SK-N-SH (cell line): ENCODE measurements at regions of chr11 and their contacts with region 1.

Region 1: DNA sequence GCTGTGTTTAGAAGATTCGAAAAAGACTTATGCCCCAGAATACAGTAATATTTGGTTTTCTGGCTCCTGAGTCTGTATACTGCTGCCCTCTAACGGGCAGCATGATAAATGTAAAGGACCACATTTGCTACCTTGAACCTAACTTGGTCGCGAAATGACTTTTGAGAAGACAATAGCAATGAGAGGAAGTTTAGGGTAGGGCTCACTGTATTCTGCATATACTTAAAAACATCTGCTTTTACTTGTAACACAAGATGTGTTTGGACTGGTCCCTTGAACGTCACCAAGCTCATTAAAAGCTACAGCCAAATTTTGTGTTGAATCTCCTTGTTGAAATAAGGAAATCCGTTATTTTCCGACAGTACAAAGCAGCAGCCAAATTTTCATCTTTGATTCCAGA is 309.1 kb downstream of the SWAP70 start:
- DNase-seq: peak; percentile 67
- H3K4me3 ChIP-seq: no peak overlapping the region
- H3K27ac ChIP-seq: no peak overlapping the region; a peak in 1 of 4 replicates
- H3K4me1 ChIP-seq: peaks cover 2 to 4% of the 10 kb centered on the region in 2 experiments; a peak in 2 of 4 replicates
- H3K27me3 ChIP-seq: no peaks in the 10 kb centered on the region
- CTCF ChIP-seq: peak; percentile 88
- EP300 ChIP-seq: no peak
- RAD21 ChIP-seq: peak; percentile 84

Region 2: GRCh38 chr11:9982800-9983579 is 10.0 kb after region 1 on chr11:
- CTCF ChIA-PET with region 1: interaction called, 18 read pairs
- POLR2A ChIA-PET with region 1: no interaction called
- DNase-seq: no peak
- H3K4me3 ChIP-seq: no peak overlapping the region
- H3K27ac ChIP-seq: peak overlapping the region in 1 of 2 experiments; percentile 58; a peak in 3 of 4 replicates
- H3K4me1 ChIP-seq: peaks cover 5 to 13% of the 10 kb centered on the region in 2 experiments; a peak in 2 of 4 replicates
- H3K27me3 ChIP-seq: no peaks in the 10 kb centered on the region
- CTCF ChIP-seq: no peak
- EP300 ChIP-seq: no peak
- RAD21 ChIP-seq: no peak

Region 3: GRCh38 chr11:10247011-10247410 is 274.0 kb after region 1 on chr11:
- CTCF ChIA-PET with region 1: no interaction called
- POLR2A ChIA-PET with region 1: no interaction called
- DNase-seq: no peak
- H3K4me3 ChIP-seq: no peak overlapping the region
- H3K27ac ChIP-seq: no peak overlapping the region
- H3K4me1 ChIP-seq: peaks cover 0 to 4% of the 10 kb centered on the region in 2 experiments; a peak in 1 of 4 replicates
- H3K27me3 ChIP-seq: no peaks in the 10 kb centered on the region
- CTCF ChIP-seq: no peak
- EP300 ChIP-seq: no peak
- RAD21 ChIP-seq: no peak